Gastrocnemius medialis (tissue), 4 donors: ENCODE measurements at regions of chr1 and their contacts with region 1.

Region 1: GRCh38 chr1:206693029-206693428 is 8.3 kb downstream of the MAPKAPK2 start:
- DNase-seq: peak; percentile 81 to 93
- ATAC-seq: peak; percentile 60 to 67
- H3K4me3 ChIP-seq: peak overlapping the region; percentile 34 to 55 (median 37)
- H3K27ac ChIP-seq: peak overlapping the region; percentile 93 to 98 (median 96)
- H3K4me1 ChIP-seq: peaks cover 100% of the 10 kb centered on the region in 2 donors
- H3K27me3 ChIP-seq: no peaks in the 10 kb centered on the region
- CTCF ChIP-seq: no peak
- POLR2A ChIP-seq: peak; percentile 57 to 60

Region 2: DNA sequence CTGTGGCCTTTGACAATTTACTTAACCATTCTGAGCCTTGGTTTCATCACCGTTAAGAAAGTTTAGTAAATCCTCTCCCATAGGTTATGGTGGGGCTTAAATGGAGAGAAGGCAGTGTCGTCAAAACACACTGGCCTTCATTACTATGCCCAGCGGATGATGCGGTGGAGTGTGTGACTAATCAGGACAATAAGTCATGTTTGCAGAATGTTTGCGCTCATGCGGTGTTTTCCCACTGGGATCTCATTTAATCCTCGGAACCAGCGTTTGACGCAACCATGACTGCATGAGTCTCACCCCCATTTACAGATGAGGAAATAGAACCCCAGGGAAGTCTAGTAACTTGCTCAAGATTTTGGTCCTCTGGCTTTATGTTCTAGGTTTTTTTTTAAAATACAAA is 767.3 kb before region 1 on chr1:
- in situ Hi-C with region 1: no loop called
- intact Hi-C with region 1: no loop called
- DNase-seq: no peak
- ATAC-seq: peak in 1 of 2 donors; percentile 24
- H3K4me3 ChIP-seq: no peak overlapping the region
- H3K27ac ChIP-seq: no peak overlapping the region
- H3K4me1 ChIP-seq: peaks cover under 1 to 3% of the 10 kb centered on the region in 2 donors
- H3K27me3 ChIP-seq: no peaks in the 10 kb centered on the region
- CTCF ChIP-seq: no peak
- POLR2A ChIP-seq: no peak

Region 3: DNA sequence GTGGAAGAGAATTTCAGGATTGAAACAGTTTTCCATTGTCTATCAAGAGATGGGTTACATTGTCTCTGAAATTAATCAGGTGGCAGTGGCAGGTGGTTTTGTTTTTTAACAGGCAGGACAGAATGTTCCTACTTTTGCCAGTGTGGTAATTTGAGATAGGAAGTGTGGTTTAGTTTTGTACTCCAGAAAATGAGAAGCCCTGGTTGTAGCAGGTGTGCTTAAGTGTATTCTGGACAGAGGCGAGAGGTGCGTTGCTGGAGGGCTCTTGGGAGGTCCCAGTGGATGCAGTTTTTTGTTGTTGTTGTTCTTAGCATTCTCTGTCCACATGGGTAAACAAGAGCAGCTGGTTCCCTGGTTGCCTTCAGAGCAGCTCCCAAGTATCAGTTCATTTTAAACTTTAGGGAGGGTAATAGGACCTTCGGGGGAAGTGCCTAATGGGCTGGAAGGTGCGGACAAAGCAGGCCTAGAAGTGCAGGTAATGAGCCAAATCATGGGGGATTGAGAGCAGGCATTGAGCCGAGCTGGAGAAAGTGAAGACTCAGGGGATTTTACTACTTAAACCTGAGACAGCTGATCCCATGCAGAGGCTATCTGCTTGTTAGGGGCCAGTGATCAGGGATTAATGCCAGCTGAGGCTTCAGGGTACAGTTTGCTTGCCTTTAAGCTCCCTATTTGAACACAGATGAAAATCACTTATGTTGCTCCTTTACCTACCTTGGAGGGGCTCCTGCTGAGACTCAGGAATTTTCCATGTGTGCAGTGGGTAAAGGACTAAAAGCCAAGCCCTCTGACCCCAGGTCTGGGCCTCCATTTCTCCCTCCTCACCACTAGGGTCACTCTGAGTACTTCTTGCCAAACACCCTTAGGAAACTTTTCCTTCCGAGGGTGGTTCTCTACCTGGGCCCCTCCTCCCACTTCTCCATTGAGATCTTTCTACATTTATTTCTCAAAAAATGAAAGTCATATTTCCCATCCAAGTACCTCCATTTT is 366.1 kb after region 1 on chr1:
- in situ Hi-C with region 1: no loop called
- intact Hi-C with region 1: loop called (anchors 5 kb)
- DNase-seq: peak; percentile 47 to 53
- ATAC-seq: peak; percentile 85 to 88
- H3K4me3 ChIP-seq: peak overlapping the region in 2 of 4 donors; percentile 1 to 14
- H3K27ac ChIP-seq: peak overlapping the region; percentile 93 to 95 (median 94)
- H3K4me1 ChIP-seq: peaks cover 37 to 64% of the 10 kb centered on the region in 2 donors
- H3K27me3 ChIP-seq: no peaks in the 10 kb centered on the region
- CTCF ChIP-seq: peak in 3 of 5 experiments; percentile 24 to 45 (median 42)
- POLR2A ChIP-seq: peak; percentile 68 to 82

Region 4: DNA sequence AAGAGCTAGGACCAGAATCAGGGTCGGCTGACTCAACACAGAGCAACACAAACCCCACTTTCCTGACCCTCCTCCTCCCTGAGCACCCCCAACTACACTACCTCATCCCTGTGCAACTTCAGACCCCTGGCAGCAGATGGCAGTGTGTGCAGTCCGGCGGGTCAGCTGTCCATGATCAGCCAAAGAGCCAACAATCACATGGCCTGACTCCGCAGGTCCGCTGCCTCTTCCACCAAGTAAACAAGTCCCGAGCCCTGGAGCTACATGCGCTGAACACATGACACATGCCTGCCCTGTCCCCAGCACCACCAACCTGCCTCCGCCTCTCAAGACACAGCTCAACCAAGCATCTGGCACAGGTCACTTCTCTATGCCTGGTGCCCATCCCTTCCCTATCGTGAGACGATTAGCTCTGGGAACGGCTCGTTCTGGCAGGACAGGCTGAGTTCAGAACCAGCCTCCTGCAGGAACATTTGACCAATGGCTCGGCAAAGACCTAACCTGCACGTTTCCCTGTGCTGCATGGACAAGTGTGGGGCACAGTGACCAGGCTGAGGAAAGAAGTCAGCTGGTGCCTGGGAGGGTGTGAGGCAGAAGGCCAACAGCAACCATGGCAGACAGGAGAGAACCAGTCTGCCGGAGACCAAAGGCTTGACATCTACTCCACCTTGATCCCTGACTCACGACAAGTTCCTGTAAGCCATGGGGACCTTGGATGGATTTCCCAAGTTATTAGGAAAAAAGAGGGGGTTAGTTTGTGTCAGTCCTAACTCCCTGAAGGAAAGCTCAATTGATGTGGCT is 1119.1 kb after region 1 on chr1:
- in situ Hi-C with region 1: loop called in 1 of 4 experiments (anchors 25 kb)
- intact Hi-C with region 1: loop called (anchors 10 kb)
- DNase-seq: peak; percentile 97
- ATAC-seq: peak; percentile 63 to 64
- H3K4me3 ChIP-seq: peak overlapping the region; percentile 30 to 95 (median 58)
- H3K27ac ChIP-seq: peak overlapping the region; percentile 96 to 100 (median 99)
- H3K4me1 ChIP-seq: peaks cover 92 to 96% of the 10 kb centered on the region in 2 donors
- H3K27me3 ChIP-seq: no peaks in the 10 kb centered on the region
- CTCF ChIP-seq: peak in 4 of 5 experiments; percentile 59 to 81 (median 72)
- POLR2A ChIP-seq: peak; percentile 61 to 78